Heart left ventricle (tissue), 16 donors: ENCODE measurements at regions of chr5 and their contacts with region 1.

Region 1: DNA sequence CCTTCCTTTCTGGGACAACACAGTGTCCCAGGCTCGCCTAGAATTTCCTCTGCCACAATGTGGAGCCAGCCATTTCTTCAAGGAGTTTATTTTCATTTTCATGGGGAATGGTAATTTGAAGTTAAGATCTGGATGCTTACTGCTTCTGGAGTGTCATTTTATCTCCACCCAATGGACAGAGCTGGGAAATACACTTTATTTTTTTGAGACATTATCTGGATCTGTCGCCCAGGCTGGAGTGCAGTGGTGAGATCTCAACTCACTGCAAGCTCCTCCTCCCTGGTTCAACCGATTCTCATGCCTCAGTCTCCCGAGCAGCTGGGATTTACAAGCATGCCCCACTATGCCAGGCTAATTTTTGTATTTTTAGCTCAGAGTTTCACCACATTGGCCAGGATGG is 12.7 kb upstream of the THG1L start:
- DNase-seq: peak in 1 of 5 donors; percentile 19
- ATAC-seq: peak; percentile 51 to 93 (median 84)
- H3K4me3 ChIP-seq: peak overlapping the region in 2 of 12 donors; percentile 12 to 16
- H3K27ac ChIP-seq: peak overlapping the region in 1 of 12 donors; percentile 25
- H3K4me1 ChIP-seq: peaks cover 0 to 12% (median 2%) of the 10 kb centered on the region in 12 donors
- H3K27me3 ChIP-seq: no peaks in the 10 kb centered on the region
- CTCF ChIP-seq: peak; percentile 45 to 77 (median 70)
- POLR2A ChIP-seq: no peak

Region 2: DNA sequence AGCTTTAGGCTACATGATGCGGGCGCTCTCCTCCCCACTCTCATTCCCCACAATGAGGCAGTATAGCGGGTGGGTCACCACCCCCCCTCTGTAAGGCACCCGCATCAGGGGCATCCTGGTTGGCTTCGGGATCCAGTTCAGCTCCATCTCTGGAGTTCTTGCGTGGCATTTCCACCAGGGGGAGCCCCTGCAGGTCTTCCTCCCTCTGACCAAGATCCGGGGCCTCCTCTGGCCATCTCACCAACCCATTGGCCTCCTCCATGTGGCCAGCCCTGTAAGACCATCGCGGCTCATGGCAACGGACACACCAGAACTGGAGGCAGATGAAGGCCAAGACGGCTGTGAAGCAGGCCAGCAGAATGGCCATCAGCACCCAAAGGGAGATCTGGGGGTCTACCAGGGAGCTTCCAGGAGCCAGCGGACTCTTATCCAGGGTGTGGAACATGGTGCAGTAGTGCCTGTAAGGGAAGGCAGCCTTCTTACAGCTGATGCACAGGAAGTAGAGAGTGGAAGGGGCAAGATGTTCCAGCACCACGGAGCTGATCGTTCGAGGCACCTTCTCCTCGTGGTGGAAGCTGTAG is 375.6 kb before region 1 on chr5:
- intact Hi-C with region 1: loop called in 2 of 10 experiments (anchors 10 kb)
- DNase-seq: peak in 1 of 5 donors; percentile 41
- ATAC-seq: peak in 3 of 4 donors; percentile 5 to 35 (median 22)
- H3K4me3 ChIP-seq: no peak overlapping the region
- H3K27ac ChIP-seq: no peak overlapping the region
- H3K4me1 ChIP-seq: peaks cover 0 to 10% (median 0%) of the 10 kb centered on the region in 12 donors
- H3K27me3 ChIP-seq: no peaks in the 10 kb centered on the region
- CTCF ChIP-seq: peak in 10 of 12 donors; percentile 21 to 51 (median 40)
- POLR2A ChIP-seq: no peak

Region 3: DNA sequence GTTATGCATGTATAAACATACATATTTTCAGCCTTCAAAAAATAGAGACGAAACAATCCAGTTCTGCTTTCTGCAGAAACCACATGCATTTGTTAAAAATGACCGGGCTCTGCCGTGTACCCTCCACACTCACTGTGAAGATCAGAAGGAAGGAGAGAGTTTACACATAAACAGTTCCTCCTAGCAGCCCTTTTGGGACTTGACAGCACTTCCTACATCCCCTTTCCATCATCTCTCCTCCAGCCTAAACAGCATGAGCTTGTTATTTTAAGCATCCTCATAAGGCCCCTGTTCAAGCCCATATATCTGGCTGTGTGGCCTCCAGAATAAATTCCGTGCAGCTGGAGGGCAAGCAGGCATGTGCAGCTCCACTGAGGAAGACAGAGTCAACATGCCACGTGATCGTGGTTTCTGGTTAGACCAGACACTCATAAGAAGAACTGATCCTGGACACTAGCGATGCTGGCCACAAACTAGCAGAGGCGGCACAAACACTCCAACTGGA is 216.3 kb before region 1 on chr5:
- intact Hi-C with region 1: loop called in 1 of 10 experiments (anchors 10 kb)
- DNase-seq: no peak
- ATAC-seq: peak in 2 of 4 donors; percentile 35 to 48
- H3K4me3 ChIP-seq: no peak overlapping the region
- H3K27ac ChIP-seq: peak overlapping the region in 1 of 12 donors; percentile 67
- H3K4me1 ChIP-seq: peaks cover 0 to 33% (median 9%) of the 10 kb centered on the region in 12 donors
- H3K27me3 ChIP-seq: no peaks in the 10 kb centered on the region
- CTCF ChIP-seq: no peak
- POLR2A ChIP-seq: no peak

Region 4: GRCh38 chr5:157665467-157666100 is 52.9 kb before region 1 on chr5:
- intact Hi-C with region 1: loop called in 3 of 10 experiments (anchors 5 to 10 kb)
- DNase-seq: no peak
- ATAC-seq: no peak
- H3K4me3 ChIP-seq: no peak overlapping the region
- H3K27ac ChIP-seq: no peak overlapping the region
- H3K4me1 ChIP-seq: peaks cover 0 to 5% (median under 1%) of the 10 kb centered on the region in 12 donors
- H3K27me3 ChIP-seq: peaks cover 0 to 6% (median 0%) of the 10 kb centered on the region in 9 donors
- CTCF ChIP-seq: no peak
- POLR2A ChIP-seq: no peak